GM13977 (cell line): ENCODE measurements at regions of chr5 and their contacts with region 1.

Region 1: GRCh38 chr5:77784735-77785134 is 8.6 kb upstream of the TBCA start:
- DNase-seq: no peak
- CTCF ChIP-seq: no peak

Region 2: GRCh38 chr5:77839691-77840090 is 55.0 kb after region 1 on chr5:
- in situ Hi-C with region 1: loop called (anchors 5 kb)
- DNase-seq: no peak
- CTCF ChIP-seq: no peak

Region 3: DNA sequence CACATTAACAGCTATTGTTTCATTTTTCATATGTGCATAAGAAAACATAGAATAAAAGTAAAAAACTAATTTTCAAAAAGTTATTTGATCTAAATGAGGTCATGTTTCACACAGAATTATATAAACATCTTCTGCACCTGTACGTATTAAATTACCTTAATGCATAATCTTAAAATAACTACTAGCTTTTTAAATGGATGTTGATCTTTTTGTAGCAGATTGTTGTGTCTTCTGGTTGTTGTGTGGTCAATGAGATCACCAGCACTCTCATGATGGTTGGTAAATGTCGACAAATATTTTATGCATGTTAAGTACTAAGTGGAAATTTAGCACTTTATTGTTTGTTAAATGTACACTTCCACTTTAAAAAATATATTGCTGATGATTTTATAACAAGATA is 347.8 kb after region 1 on chr5:
- in situ Hi-C with region 1: no loop called
- DNase-seq: no peak
- CTCF ChIP-seq: no peak

Region 4: GRCh38 chr5:78433972-78434371 is 649.2 kb after region 1 on chr5:
- in situ Hi-C with region 1: no loop called
- DNase-seq: no peak
- CTCF ChIP-seq: no peak